Mammary epithelial cell (primary cell): ENCODE measurements at regions of chr1 and their contacts with region 1.

Region 1: GRCh38 chr1:143625886-143626285 is 345.9 kb downstream of the FAM72C start:
- DNase-seq: no peak
- H3K4me3 ChIP-seq: no peak overlapping the region
- H3K27ac ChIP-seq: no peak overlapping the region
- H3K4me1 ChIP-seq: no peaks in the 10 kb centered on the region
- H3K27me3 ChIP-seq: no peaks in the 10 kb centered on the region
- CTCF ChIP-seq: no peak

Region 2: DNA sequence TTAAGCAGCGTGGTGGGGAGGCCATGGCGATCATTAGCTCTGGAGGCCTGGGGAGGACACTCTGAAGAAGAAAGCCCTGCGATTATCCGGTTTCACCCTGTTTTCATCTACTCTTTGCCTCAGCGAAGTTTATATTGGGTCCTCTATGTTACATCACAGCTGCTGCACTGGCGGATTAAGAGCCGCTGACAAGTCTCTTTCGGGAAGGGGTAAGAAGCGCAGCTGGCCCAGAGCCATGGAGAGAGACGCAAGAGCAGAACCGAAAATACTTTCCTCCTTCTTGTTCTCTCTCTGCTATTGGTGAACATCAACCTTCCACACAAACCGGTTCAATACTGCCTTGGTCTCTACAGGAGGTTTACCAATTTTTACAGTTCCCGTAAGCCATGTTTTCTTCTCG is 54.4 kb after region 1 on chr1:
- CTCF ChIA-PET with region 1: no interaction called
- dilution Hi-C with region 1: loop called (anchors 10 kb)
- in situ Hi-C with region 1: no loop called
- intact Hi-C with region 1: no loop called
- DNase-seq: no peak
- H3K4me3 ChIP-seq: no peak overlapping the region
- H3K27ac ChIP-seq: no peak overlapping the region
- H3K4me1 ChIP-seq: no peaks in the 10 kb centered on the region
- H3K27me3 ChIP-seq: no peaks in the 10 kb centered on the region
- CTCF ChIP-seq: no peak